GM13976 (cell line): ENCODE measurements at regions of chr20 and their contacts with region 1.

Region 1: DNA sequence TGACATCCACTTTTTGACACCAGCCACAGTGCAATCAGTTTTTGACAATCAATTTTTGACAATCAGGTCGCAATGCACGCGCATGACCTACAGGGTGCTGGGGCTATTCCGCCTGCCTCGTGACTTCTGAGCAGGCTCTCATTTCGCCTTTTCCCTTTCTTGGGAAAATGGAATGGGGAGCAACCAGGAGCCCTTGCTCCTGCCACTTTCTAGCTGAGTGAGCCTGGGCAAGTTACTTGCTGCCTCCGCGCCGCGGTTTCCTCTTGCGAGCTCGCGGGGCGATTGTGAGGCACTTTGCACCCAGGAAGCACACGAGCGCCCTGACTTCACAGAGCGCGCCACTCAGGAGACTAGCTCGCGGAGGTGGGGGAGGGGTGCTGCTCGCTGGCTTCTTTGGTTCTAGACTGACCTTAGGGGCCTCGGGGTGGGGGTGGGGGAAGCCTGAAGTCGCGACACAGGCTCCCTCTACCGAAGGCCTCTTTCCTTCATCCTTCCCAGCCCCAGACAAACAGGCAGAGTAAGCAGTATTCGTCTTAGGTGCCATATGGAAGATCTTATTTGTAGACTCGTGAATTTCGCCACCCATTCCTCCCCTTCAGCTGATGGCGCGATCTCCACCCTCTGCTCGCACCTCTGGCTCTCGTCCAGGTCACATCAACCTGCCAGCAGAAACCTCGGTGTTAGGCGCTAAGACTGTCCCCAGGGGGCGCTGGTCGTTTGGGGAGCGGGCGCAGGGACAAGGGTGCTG is 4.6 kb downstream of the TP53TG5 start:
- DNase-seq: peak; percentile 88
- CTCF ChIP-seq: peak; percentile 98

Region 2: GRCh38 chr20:44849703-44850102 is 523.8 kb before region 1 on chr20:
- in situ Hi-C with region 1: no loop called
- DNase-seq: no peak
- CTCF ChIP-seq: no peak

Region 3: GRCh38 chr20:44885392-44886265 is 487.9 kb before region 1 on chr20 and contains the start of gene YWHAB:
- in situ Hi-C with region 1: no loop called
- DNase-seq: peak; percentile 98
- CTCF ChIP-seq: no peak

Region 4: DNA sequence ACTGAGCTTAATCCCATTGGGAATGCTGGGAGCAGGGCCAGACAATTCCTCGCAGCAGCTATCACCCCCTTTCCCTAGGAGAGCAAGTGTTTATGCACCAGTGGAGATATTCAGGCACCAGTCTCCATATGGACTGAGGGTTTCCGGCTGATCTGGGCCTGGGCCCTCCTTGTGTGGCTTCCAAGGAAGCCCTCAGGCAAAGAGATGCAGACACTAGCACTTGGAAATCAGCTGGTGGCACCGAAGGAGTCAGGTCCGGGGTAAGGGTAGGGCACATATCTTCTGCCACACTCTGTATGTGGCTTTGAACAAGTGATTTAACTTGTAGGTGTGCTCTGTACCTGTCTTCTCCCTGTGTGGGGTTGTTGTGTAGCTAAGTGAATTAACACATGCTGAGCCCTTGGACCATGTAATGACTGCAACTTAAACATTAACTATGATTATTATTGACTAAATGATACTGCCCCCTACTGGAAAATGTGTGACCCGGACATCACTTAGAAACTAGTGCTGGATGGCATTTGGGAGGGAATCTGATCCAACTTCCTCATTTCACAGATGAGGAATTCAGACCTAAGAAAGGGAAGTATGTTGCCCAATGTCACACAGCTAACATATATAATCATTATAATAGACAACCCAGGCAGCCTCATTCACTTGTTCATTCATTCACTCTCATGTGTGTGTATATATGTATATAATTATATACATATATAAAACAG is 76.7 kb after region 1 on chr20:
- in situ Hi-C with region 1: loop called (anchors 10 kb)
- DNase-seq: peak; percentile 45
- CTCF ChIP-seq: peak; percentile 43

Region 5: DNA sequence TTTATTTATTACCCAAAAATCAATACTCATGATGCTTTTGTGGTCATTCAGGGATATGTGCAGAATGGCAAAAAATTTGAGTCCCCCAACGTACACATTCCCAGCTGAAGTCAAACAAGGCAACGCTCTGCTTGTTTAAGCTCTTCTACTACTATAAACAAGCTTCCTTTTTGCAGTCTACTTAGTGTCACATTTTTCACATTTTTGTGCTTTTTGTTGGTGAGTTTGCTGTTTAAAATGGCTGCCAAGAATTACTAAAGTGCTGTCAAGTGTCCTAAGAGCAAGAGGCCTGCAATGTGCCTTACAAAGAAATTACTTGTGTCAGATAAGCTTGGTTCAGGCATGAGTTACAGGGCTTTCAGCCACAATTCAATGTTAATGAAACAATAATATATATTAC is 203.5 kb after region 1 on chr20:
- in situ Hi-C with region 1: no loop called
- DNase-seq: no peak
- CTCF ChIP-seq: no peak